ENCODE measurements at regions of chr7 and their contacts with region 1.

Region 1: DNA sequence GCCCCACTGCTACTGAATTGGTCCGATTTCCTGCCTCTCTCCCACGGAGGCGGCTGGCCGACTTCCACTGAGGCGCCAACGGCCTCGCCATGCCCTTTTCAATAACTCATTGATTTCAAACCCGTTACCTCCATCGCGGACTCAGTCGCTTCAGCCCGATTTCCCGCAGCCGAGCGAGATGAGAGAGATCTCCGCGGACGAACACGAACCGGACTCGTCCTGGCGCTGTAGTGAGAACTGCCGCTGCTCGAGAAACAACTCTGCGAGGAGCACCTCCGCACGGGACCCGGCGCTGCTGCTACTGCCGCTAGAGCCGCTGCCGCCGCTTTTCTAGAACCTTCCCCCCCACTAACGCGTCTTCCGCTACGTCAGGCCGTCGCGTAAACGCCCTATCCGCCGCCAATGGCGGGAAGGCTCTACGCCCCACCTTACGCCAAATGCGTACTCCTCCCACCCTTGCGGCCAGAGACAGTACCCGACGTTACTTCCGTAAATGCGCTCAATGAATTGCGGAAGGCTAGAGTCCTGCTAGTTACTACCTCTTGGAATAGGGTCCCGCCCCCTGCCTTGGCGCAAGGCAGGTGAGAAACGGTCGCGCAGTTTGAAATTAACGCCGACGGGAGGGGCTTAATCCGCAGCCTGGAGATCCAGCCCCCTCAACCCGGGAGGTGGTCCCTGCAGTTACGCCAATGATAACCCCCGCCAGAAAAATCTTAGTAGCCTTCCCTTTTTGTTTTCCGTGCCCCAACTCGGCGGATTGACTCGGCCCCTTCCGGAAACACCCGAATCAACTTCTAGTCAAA is at the start of gene HNRNPA2B1:
- DNase-seq: peak; percentile 98
- ATAC-seq: peak; percentile 68
- H3K4me3 Mint-ChIP-seq: peak within 1 kb of the TSS; percentile 99
- H3K27ac Mint-ChIP-seq: peak within 1 kb of the TSS; percentile 99
- H3K4me1 Mint-ChIP-seq: peaks cover 40% of the 10 kb centered on the region
- H3K27me3 Mint-ChIP-seq: no peaks in the 10 kb centered on the region
- total RNA-seq, gene HNRNPA2B1: 653 to 667 TPM

Region 2: GRCh38 chr7:25926009-25926408 is 274.6 kb before region 1 on chr7:
- POLR2A ChIA-PET with region 1: no interaction called
- DNase-seq: no peak
- ATAC-seq: no peak
- H3K4me3 Mint-ChIP-seq: no peak overlapping the region
- H3K27ac Mint-ChIP-seq: no peak overlapping the region
- H3K4me1 Mint-ChIP-seq: no peaks in the 10 kb centered on the region
- H3K27me3 Mint-ChIP-seq: peaks cover 24% of the 10 kb centered on the region

Region 3: DNA sequence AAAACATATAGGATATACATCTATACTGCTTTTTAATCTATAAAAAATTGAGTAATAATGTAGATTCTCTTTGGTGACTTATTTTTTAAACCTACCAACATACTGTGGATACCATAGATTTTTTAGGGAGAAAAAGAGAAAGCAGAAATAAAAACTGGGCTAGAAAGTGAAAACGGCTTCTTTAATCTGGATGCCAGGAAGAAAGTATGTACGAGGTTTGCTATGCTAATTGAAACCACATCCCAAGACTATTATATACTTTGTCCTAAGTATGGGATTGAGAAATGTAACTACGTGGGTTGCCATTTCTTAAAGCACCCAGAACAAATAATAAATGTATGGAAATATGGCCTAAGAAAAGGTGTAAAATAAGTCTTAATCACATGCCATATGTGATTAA is 177.7 kb before region 1 on chr7:
- POLR2A ChIA-PET with region 1: no interaction called
- DNase-seq: no peak
- ATAC-seq: no peak
- H3K4me3 Mint-ChIP-seq: no peak overlapping the region
- H3K27ac Mint-ChIP-seq: no peak overlapping the region
- H3K4me1 Mint-ChIP-seq: no peaks in the 10 kb centered on the region
- H3K27me3 Mint-ChIP-seq: no peaks in the 10 kb centered on the region

Region 4: DNA sequence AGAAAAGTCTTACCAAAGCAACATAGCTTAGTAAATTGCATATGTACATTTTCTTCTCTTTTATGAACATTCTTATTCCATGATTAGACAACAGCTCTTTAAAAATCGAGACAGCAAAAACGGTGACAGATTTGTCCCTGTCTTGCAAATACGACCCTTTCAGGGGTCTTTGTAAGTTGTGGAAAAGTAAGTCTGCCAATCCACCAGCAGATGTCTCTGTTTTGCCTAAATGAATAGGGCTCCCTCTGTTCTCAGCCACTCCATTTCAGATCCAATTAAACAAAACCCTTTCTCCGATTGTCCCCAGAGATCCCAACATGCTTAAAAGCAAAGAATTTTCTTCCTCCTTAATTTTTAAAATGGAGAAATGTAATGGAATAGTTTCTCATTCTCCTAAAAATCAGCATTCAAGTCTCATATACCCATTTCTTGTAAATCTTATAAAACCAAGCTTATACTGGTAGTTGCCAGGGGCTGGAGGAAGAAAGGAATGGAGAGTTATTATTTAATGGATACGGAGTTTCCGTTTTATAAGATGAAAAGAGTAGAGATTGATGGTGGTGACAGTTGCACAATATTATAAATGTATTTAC is 109.6 kb before region 1 on chr7:
- POLR2A ChIA-PET with region 1: interaction called, 13 read pairs
- DNase-seq: no peak
- ATAC-seq: peak; percentile 46
- H3K4me3 Mint-ChIP-seq: peak overlapping the region; percentile 20
- H3K27ac Mint-ChIP-seq: peak overlapping the region; percentile 17
- H3K4me1 Mint-ChIP-seq: peaks cover 16% of the 10 kb centered on the region
- H3K27me3 Mint-ChIP-seq: peaks cover 2% of the 10 kb centered on the region

Region 5: GRCh38 chr7:26187380-26188205 is 13.1 kb before region 1 on chr7:
- POLR2A ChIA-PET with region 1: interaction called, 107 read pairs
- DNase-seq: no peak
- ATAC-seq: peak; percentile 6
- H3K4me3 Mint-ChIP-seq: peak overlapping the region; percentile 44
- H3K27ac Mint-ChIP-seq: peak overlapping the region; percentile 73
- H3K4me1 Mint-ChIP-seq: peaks cover 60% of the 10 kb centered on the region
- H3K27me3 Mint-ChIP-seq: no peaks in the 10 kb centered on the region

Region 6: GRCh38 chr7:26250239-26250638 is 49.6 kb after region 1 on chr7:
- POLR2A ChIA-PET with region 1: no interaction called
- DNase-seq: no peak
- ATAC-seq: no peak
- H3K4me3 Mint-ChIP-seq: no peak overlapping the region
- H3K27ac Mint-ChIP-seq: no peak overlapping the region
- H3K4me1 Mint-ChIP-seq: peaks cover 1% of the 10 kb centered on the region
- H3K27me3 Mint-ChIP-seq: peaks cover 8% of the 10 kb centered on the region

Region 7: DNA sequence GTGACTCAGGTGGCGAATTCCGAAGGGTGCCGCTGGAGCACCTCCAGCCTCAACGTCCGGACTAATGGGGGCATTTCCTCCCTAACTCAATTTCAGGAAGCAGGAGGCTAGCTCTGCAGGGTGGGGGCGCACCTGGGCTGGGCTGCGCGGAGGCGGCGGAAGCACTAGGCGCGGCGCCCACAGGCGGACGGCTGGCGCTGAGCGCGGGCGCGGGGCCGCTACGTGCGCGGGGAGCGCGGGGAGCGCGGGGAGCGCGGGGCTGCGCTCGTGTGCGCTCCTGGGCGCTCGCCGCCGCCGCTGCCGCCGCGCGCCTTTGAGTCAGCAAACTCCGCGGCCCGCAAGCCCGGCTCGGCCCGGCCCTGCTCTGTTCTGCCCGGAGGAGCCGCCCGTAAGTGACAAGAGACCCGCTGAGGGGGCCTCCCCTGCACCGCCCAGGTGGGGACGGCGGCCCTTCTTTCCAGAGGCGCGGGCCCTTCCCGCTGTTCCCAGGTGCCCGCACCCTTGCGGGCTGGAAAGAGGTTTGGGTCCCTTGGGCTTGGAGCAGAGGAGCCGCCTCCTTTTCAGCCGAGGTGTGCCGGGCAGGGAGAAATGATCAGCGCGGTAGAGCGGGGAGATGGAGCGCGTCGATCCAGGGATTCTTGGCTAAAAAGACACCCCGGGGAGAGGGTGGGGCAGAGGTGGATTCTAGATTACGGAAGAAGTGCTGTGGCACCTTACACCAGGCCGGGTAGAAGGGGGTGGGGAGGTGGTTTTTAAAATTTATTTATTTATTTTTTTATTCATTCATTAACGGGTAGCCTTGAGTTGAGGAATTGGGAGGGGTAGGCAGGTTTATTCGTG is 91.3 kb after region 1 on chr7 and contains the start of gene SNX10:
- POLR2A ChIA-PET with region 1: interaction called, 25 read pairs
- DNase-seq: peak; percentile 85
- ATAC-seq: peak; percentile 85
- H3K4me3 Mint-ChIP-seq: peak within 1 kb of the TSS; percentile 93
- H3K27ac Mint-ChIP-seq: peak within 1 kb of the TSS; percentile 95
- H3K4me1 Mint-ChIP-seq: peaks cover 35% of the 10 kb centered on the region
- H3K27me3 Mint-ChIP-seq: peaks cover 2% of the 10 kb centered on the region
- total RNA-seq, gene SNX10: 31.0 to 31.6 TPM